SK-N-SH (cell line): ENCODE measurements at regions of chr11 and their contacts with region 1.

Region 1: GRCh38 chr11:20397281-20397680 is 9.8 kb downstream of the PRMT3 start:
- DNase-seq: peak; percentile 42
- H3K4me3 ChIP-seq: no peak overlapping the region
- H3K27ac ChIP-seq: no peak overlapping the region
- H3K4me1 ChIP-seq: no peaks in the 10 kb centered on the region; a peak in 1 of 4 replicates
- H3K27me3 ChIP-seq: no peaks in the 10 kb centered on the region
- CTCF ChIP-seq: peak; percentile 76
- EP300 ChIP-seq: no peak
- RAD21 ChIP-seq: peak; percentile 70

Region 2: GRCh38 chr11:20213790-20214189 is 183.5 kb before region 1 on chr11:
- CTCF ChIA-PET with region 1: no interaction called
- POLR2A ChIA-PET with region 1: no interaction called
- DNase-seq: no peak
- H3K4me3 ChIP-seq: no peak overlapping the region
- H3K27ac ChIP-seq: no peak overlapping the region
- H3K4me1 ChIP-seq: no peaks in the 10 kb centered on the region
- H3K27me3 ChIP-seq: 0 out of 2 replicates have a peak, but pooled peaks cover 3% of the 10 kb centered on the region
- CTCF ChIP-seq: no peak
- EP300 ChIP-seq: no peak
- RAD21 ChIP-seq: no peak

Region 3: DNA sequence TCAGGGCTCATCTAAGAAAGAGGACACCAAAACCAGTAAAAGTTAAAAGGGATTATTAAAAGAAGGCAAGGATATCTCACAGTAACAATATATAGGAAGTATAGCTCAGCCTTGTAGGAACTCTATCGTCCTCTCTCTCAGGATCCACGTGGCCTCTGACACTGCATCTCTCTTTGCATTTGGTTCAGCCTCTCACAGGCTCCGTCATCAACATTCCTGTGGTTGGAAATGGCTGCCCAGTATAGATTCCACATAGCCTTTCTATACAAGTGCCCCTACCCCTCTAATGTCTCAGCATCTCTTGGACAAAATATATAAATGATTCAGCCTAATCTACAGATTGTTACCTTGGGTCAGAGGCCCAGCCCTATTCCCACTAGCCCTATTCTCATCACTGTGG is 135.8 kb before region 1 on chr11:
- CTCF ChIA-PET with region 1: no interaction called
- POLR2A ChIA-PET with region 1: no interaction called
- DNase-seq: no peak
- H3K4me3 ChIP-seq: no peak overlapping the region
- H3K27ac ChIP-seq: no peak overlapping the region
- H3K4me1 ChIP-seq: no peaks in the 10 kb centered on the region; a peak in 1 of 4 replicates
- H3K27me3 ChIP-seq: no peaks in the 10 kb centered on the region
- CTCF ChIP-seq: no peak
- EP300 ChIP-seq: no peak
- RAD21 ChIP-seq: no peak

Region 4: GRCh38 chr11:20278727-20279126 is 118.6 kb before region 1 on chr11:
- CTCF ChIA-PET with region 1: no interaction called
- POLR2A ChIA-PET with region 1: no interaction called
- DNase-seq: no peak
- H3K4me3 ChIP-seq: no peak overlapping the region
- H3K27ac ChIP-seq: no peak overlapping the region
- H3K4me1 ChIP-seq: no peaks in the 10 kb centered on the region
- H3K27me3 ChIP-seq: peaks cover 15% of the 10 kb centered on the region
- CTCF ChIP-seq: no peak
- EP300 ChIP-seq: no peak
- RAD21 ChIP-seq: no peak

Region 5: GRCh38 chr11:20415432-20415831 is 18.2 kb after region 1 on chr11:
- CTCF ChIA-PET with region 1: interaction called, 12 read pairs
- POLR2A ChIA-PET with region 1: no interaction called
- DNase-seq: no peak
- H3K4me3 ChIP-seq: no peak overlapping the region
- H3K27ac ChIP-seq: no peak overlapping the region
- H3K4me1 ChIP-seq: peaks cover 0 to 8% of the 10 kb centered on the region in 2 experiments; a peak in 2 of 4 replicates
- H3K27me3 ChIP-seq: no peaks in the 10 kb centered on the region
- CTCF ChIP-seq: no peak
- EP300 ChIP-seq: no peak
- RAD21 ChIP-seq: no peak

Region 6: GRCh38 chr11:20443596-20443995 is 46.3 kb after region 1 on chr11:
- CTCF ChIA-PET with region 1: interaction called, 14 read pairs
- POLR2A ChIA-PET with region 1: interaction called, 3 read pairs
- DNase-seq: peak; percentile 17
- H3K4me3 ChIP-seq: no peak overlapping the region
- H3K27ac ChIP-seq: no peak overlapping the region
- H3K4me1 ChIP-seq: no peaks in the 10 kb centered on the region; a peak in 1 of 4 replicates
- H3K27me3 ChIP-seq: no peaks in the 10 kb centered on the region
- CTCF ChIP-seq: peak; percentile 64
- EP300 ChIP-seq: no peak
- RAD21 ChIP-seq: peak; percentile 73

Region 7: GRCh38 chr11:20518323-20518834 is 121.1 kb after region 1 on chr11:
- CTCF ChIA-PET with region 1: no interaction called
- POLR2A ChIA-PET with region 1: no interaction called
- DNase-seq: no peak
- H3K4me3 ChIP-seq: no peak overlapping the region
- H3K27ac ChIP-seq: no peak overlapping the region
- H3K4me1 ChIP-seq: no peaks in the 10 kb centered on the region
- H3K27me3 ChIP-seq: no peaks in the 10 kb centered on the region
- CTCF ChIP-seq: no peak
- EP300 ChIP-seq: no peak
- RAD21 ChIP-seq: no peak